HepG2 (cell line): ENCODE measurements at regions of chr17 and their contacts with region 1.

Region 1: DNA sequence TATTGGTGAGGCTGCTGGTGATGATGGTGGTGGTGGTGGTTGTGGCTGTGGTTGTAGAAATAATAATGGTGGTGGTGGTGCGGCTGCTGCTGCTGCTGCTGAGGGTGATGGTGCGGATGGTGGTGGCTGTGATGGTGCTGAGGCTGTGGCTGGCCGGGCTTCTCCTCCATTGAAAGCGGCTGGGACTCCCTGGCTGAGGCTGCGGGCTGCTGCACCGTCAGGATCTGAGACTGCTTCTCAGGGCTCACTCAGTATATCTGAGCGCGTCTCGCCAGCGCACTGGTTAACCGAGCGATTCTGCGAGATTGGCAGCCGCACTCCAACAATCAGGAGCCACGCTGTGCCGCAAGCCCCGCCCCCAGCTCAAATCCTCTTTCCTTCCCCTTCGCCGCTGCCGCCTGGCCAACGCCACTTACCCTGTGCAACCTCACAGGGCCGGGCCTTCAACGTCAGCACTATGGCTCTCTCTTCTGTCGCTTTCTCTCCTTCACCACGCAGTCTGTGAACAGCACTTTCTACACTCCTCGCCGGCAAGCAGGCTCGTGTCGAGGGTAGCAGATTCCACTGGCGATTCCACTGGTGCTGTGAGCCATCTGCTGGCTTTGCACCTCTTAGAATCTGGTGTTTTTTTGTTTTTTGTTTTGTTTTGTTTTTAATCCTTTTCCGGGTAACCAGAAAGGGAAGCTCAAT is at the start of gene NUFIP2:
- DNase-seq: peak; percentile 96
- ATAC-seq: peak; percentile 97
- H3K4me3 ChIP-seq: peak within 1 kb of the TSS; percentile 92 to 99 (median 93)
- H3K27ac ChIP-seq: peak within 1 kb of the TSS; percentile 92
- H3K4me1 ChIP-seq: peaks cover 27% of the 10 kb centered on the region
- H3K27me3 ChIP-seq: no peaks in the 10 kb centered on the region; a peak in 1 of 5 replicates
- CTCF ChIP-seq: no peak
- EP300 ChIP-seq: no peak
- POLR2A ChIP-seq: peak; percentile 99 to 100
- RAD21 ChIP-seq: 0 out of 2 replicates have a peak, but pooled peaks have one; percentile 2
- total RNA-seq, gene NUFIP2: 30.8 and 51.1 TPM in 2 replicates

Region 2: GRCh38 chr17:29148790-29149430 is 145.1 kb before region 1 on chr17:
- CTCF ChIA-PET with region 1: interaction called, 4 read pairs
- POLR2A ChIA-PET with region 1: interaction called, 22 read pairs
- in situ Hi-C with region 1: no loop called
- intact Hi-C with region 1: loop called (anchors 10 kb)
- DNase-seq: peak; percentile 87
- ATAC-seq: peak; percentile 93
- H3K4me3 ChIP-seq: peak overlapping the region; percentile 25 to 55 (median 43); a peak in 5 of 6 replicates
- H3K27ac ChIP-seq: peak overlapping the region; percentile 64
- H3K4me1 ChIP-seq: peaks cover 81% of the 10 kb centered on the region
- H3K27me3 ChIP-seq: no peaks in the 10 kb centered on the region
- CTCF ChIP-seq: peak; percentile 98
- EP300 ChIP-seq: peak in 1 of 2 experiments; percentile 27; a peak in 1 of 4 replicates
- POLR2A ChIP-seq: peak in 1 of 2 experiments; percentile 33; a peak in 1 of 4 replicates
- RAD21 ChIP-seq: peak; percentile 100

Region 3: GRCh38 chr17:29180034-29180787 is 113.8 kb before region 1 on chr17 and contains the start of gene MYO18A:
- CTCF ChIA-PET with region 1: no interaction called
- POLR2A ChIA-PET with region 1: interaction called, 37 read pairs
- in situ Hi-C with region 1: no loop called
- intact Hi-C with region 1: no loop called
- DNase-seq: peak; percentile 45
- ATAC-seq: peak; percentile 64
- H3K4me3 ChIP-seq: peak within 1 kb of the TSS; percentile 68 to 88 (median 86)
- H3K27ac ChIP-seq: peak within 1 kb of the TSS; percentile 98
- H3K4me1 ChIP-seq: peaks cover 37% of the 10 kb centered on the region
- H3K27me3 ChIP-seq: no peaks in the 10 kb centered on the region; a peak in 1 of 5 replicates
- CTCF ChIP-seq: peak; percentile 88
- EP300 ChIP-seq: no peak
- POLR2A ChIP-seq: no peak
- RAD21 ChIP-seq: peak; percentile 96
- total RNA-seq, gene MYO18A: 21.2 and 24.8 TPM in 2 replicates

Region 4: DNA sequence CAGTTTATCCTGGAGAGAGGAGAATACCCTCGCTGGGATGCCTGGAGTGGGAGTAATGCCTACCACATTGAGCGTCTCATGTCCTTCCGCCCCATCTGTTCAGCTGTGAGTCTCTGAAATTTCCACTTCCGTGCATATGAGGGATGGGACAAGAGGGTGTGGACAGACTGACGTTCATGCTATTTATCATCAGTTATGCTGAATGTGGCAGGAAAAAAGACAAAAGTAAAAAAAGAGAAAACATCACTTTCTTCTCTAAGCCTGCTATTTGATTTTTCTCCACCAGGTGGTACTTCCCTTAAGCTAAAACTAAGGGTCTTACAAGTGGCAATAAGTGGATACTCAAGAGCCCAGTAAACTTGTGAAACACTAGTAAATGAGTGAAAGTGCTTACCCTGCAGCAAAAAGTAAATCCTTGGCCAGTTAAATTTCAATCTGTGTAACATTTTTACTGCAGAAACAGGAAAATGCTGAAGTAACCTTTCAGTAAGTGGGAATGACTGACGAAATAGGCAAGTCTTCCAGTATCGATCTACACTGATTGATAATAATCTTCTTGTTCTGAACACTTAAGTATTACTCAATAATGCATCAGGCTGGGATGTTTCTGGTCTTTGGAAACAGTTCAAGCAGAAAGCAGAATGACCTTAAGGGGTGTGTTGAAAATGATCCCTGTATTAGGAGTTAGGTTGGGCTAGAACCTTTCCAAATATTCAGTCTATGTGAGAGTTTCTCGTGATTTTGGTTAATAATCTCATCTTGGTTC is 41.8 kb before region 1 on chr17:
- CTCF ChIA-PET with region 1: interaction called, 4 read pairs
- POLR2A ChIA-PET with region 1: interaction called, 6 read pairs
- in situ Hi-C with region 1: no loop called
- intact Hi-C with region 1: loop called (anchors 5 kb)
- DNase-seq: no peak
- ATAC-seq: peak; percentile 26; the same call in 2 of the 3 replicates
- H3K4me3 ChIP-seq: no peak overlapping the region
- H3K27ac ChIP-seq: no peak overlapping the region
- H3K4me1 ChIP-seq: no peaks in the 10 kb centered on the region
- H3K27me3 ChIP-seq: no peaks in the 10 kb centered on the region
- CTCF ChIP-seq: 0 out of 2 replicates have a peak, but pooled peaks have one; percentile 7
- EP300 ChIP-seq: no peak
- POLR2A ChIP-seq: no peak
- RAD21 ChIP-seq: no peak

Region 5: GRCh38 chr17:29283271-29283895 is 10.7 kb before region 1 on chr17:
- CTCF ChIA-PET with region 1: no interaction called
- POLR2A ChIA-PET with region 1: interaction called, 17 read pairs
- in situ Hi-C with region 1: no loop called
- intact Hi-C with region 1: no loop called
- DNase-seq: no peak
- ATAC-seq: peak; percentile 36; the same call in 1 of the 3 replicates
- H3K4me3 ChIP-seq: no peak overlapping the region
- H3K27ac ChIP-seq: no peak overlapping the region
- H3K4me1 ChIP-seq: peaks cover 54% of the 10 kb centered on the region
- H3K27me3 ChIP-seq: no peaks in the 10 kb centered on the region
- CTCF ChIP-seq: no peak
- EP300 ChIP-seq: no peak
- POLR2A ChIP-seq: no peak
- RAD21 ChIP-seq: no peak

Region 6: GRCh38 chr17:29389982-29390850 is 96.2 kb after region 1 on chr17 and contains the start of gene TAOK1:
- CTCF ChIA-PET with region 1: interaction called, 3 read pairs
- POLR2A ChIA-PET with region 1: interaction called, 12 read pairs
- in situ Hi-C with region 1: no loop called
- intact Hi-C with region 1: no loop called
- DNase-seq: peak; percentile 95
- ATAC-seq: peak; percentile 93
- H3K4me3 ChIP-seq: peak within 1 kb of the TSS; percentile 86 to 87 (median 86)
- H3K27ac ChIP-seq: peak within 1 kb of the TSS; percentile 93
- H3K4me1 ChIP-seq: peaks cover 45% of the 10 kb centered on the region
- H3K27me3 ChIP-seq: no peaks in the 10 kb centered on the region; a peak in 1 of 5 replicates
- CTCF ChIP-seq: no peak
- EP300 ChIP-seq: peak in 1 of 2 experiments; percentile 30; a peak in 1 of 4 replicates
- POLR2A ChIP-seq: peak; percentile 94
- RAD21 ChIP-seq: no peak
- total RNA-seq, gene TAOK1: 23.0 and 36.2 TPM in 2 replicates